Activated CD4-positive, alpha-beta T cell treated with anti-CD3 and anti-CD28 coated beads for 36 hours (primary cell): ENCODE measurements at regions of chr9 and their contacts with region 1.

Region 1: GRCh38 chr9:95167998-95168397 is 149.5 kb downstream of the FANCC start:
- DNase-seq: peak; percentile 82
- ATAC-seq: peak; percentile 87
- H3K4me3 Mint-ChIP-seq: no peak overlapping the region
- H3K27ac Mint-ChIP-seq: no peak overlapping the region
- H3K4me1 Mint-ChIP-seq: peaks cover 16% of the 10 kb centered on the region
- H3K27me3 Mint-ChIP-seq: no peaks in the 10 kb centered on the region

Region 2: GRCh38 chr9:95157481-95158151 is 10.4 kb before region 1 on chr9:
- CTCF ChIA-PET with region 1: interaction called, 10 read pairs
- POLR2A ChIA-PET with region 1: interaction called, 3 read pairs
- intact Hi-C with region 1: no loop called
- DNase-seq: no peak
- ATAC-seq: no peak
- H3K4me3 Mint-ChIP-seq: no peak overlapping the region
- H3K27ac Mint-ChIP-seq: no peak overlapping the region
- H3K4me1 Mint-ChIP-seq: peaks cover 7% of the 10 kb centered on the region
- H3K27me3 Mint-ChIP-seq: no peaks in the 10 kb centered on the region

Region 3: DNA sequence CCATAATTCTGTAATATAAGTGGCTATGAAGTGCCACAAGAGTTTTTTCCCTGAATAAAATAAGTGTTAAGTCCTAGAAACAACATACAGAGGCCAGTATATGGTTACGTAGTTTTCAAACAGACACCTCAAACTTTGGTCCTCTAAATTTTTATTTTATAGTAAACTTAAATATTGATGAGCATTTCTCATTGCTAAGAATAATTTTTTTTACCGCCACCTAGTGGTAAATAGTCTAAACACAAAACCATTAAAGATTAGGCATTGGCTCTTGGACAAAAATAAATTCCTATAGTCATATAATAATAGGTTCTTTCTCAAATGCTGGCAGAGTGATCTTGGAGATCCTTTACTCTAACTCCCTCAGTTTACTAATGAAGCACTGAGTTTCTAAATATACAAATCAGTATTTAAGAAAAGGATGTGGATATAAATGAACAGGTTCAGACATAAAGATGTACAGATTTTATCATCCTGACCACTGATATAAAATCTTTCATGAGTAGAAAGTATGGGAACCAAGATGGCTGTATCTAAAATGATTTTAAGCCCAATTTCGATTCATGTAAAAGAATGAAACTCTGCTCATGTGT is 13.3 kb after region 1 on chr9:
- CTCF ChIA-PET with region 1: interaction called, 13 read pairs
- POLR2A ChIA-PET with region 1: no interaction called
- intact Hi-C with region 1: no loop called
- DNase-seq: no peak
- ATAC-seq: no peak
- H3K4me3 Mint-ChIP-seq: no peak overlapping the region
- H3K27ac Mint-ChIP-seq: no peak overlapping the region
- H3K4me1 Mint-ChIP-seq: no peaks in the 10 kb centered on the region
- H3K27me3 Mint-ChIP-seq: no peaks in the 10 kb centered on the region

Region 4: DNA sequence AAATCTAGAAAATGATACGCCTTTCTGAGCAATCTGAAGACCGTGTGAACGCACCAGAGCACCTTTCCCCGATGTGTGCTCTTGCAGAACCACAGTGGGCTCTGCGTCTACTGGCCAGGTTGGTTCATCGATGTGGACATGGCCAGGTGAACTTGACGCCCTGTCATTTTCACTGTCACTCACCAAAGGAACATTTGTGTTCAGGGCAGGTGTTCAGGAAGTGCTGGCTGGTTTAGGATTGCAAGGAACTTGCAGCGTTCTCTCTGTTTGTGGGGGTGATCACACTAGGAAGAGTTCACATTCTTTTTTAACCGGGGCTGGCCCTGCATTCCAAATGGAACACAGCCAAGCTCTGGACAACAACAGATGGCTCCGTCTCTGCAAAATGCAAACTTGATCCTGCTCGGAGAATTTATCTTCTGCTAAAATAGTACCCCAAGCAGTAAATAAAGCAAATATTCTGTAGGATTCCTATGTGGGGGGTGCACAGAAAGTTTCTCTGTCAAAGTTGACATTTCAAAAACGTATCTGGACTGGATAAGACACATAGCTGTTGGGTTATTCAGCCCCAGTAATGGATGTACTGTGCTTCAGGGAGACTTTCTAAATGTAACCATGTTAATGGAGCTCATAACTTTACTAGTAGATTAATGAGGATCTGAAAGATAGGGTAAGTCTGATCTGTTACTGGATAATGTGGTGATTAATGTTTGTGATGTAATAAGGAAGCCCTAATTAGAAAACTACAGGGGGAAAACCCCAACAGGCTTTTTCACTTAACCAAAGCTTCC is 195.2 kb after region 1 on chr9:
- CTCF ChIA-PET with region 1: no interaction called
- POLR2A ChIA-PET with region 1: no interaction called
- intact Hi-C with region 1: no loop called
- DNase-seq: no peak
- ATAC-seq: no peak
- H3K4me3 Mint-ChIP-seq: no peak overlapping the region
- H3K27ac Mint-ChIP-seq: no peak overlapping the region
- H3K4me1 Mint-ChIP-seq: no peaks in the 10 kb centered on the region
- H3K27me3 Mint-ChIP-seq: peaks cover 9% of the 10 kb centered on the region